WTC11 (cell line): ENCODE measurements at regions of chr6 and their contacts with region 1.

Region 1: GRCh38 chr6:113556775-113557174 is 300.4 kb upstream of the MARCKS start:
- DNase-seq: no peak
- ATAC-seq: no peak
- H3K4me3 Mint-ChIP-seq: no peak overlapping the region
- H3K27ac Mint-ChIP-seq: no peak overlapping the region
- H3K4me1 Mint-ChIP-seq: peaks cover 20% of the 10 kb centered on the region
- H3K27me3 Mint-ChIP-seq: no peaks in the 10 kb centered on the region
- CTCF ChIP-seq: no peak

Region 2: DNA sequence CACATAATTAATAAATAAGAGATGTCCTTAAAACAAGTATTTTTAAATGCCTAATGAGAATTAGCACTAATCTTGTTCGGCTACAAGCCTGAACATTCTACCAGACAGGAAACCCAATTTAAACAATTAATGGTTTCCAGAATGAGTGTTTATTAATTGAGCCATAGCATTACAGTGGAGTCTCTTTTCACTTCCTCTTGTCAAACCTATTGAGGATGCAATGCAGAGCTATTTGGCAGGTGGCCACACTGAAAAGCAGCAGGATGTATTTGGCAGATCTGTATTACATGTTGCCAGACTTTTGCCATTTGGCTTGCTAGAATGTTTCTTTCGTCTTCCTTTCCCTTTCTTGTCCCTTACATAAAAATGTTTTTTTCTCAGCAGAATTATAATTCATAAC is 174.8 kb before region 1 on chr6:
- CTCF ChIA-PET with region 1: no interaction called
- POLR2A ChIA-PET with region 1: interaction called, 10 read pairs
- DNase-seq: no peak
- ATAC-seq: no peak
- H3K4me3 Mint-ChIP-seq: no peak overlapping the region
- H3K27ac Mint-ChIP-seq: no peak overlapping the region
- H3K4me1 Mint-ChIP-seq: no peaks in the 10 kb centered on the region
- H3K27me3 Mint-ChIP-seq: no peaks in the 10 kb centered on the region
- CTCF ChIP-seq: no peak